Transverse colon (tissue), 4 donors: ENCODE measurements at regions of chr6 and their contacts with region 1.

Region 1: GRCh38 chr6:30130887-30131862 is 4.8 kb upstream of the TRIM40 start:
- DNase-seq: peak; percentile 73
- H3K4me3 ChIP-seq: no peak overlapping the region
- H3K27ac ChIP-seq: peak overlapping the region; percentile 58 to 69 (median 66)
- H3K4me1 ChIP-seq: peaks cover 8 to 34% (median 22%) of the 10 kb centered on the region in 4 donors
- H3K27me3 ChIP-seq: peaks cover 65% of the 10 kb centered on the region
- CTCF ChIP-seq: peak; percentile 94 to 99 (median 98)
- EP300 ChIP-seq: no peak
- POLR2A ChIP-seq: no peak

Region 2: GRCh38 chr6:30102970-30103874 is 28.0 kb before region 1 on chr6:
- in situ Hi-C with region 1: no loop called
- intact Hi-C with region 1: loop called (anchors 2 kb)
- DNase-seq: peak; percentile 93
- H3K4me3 ChIP-seq: peak overlapping the region in 3 of 4 donors; percentile 21 to 55 (median 27)
- H3K27ac ChIP-seq: peak overlapping the region; percentile 80 to 84 (median 82)
- H3K4me1 ChIP-seq: peaks cover 25 to 46% (median 32%) of the 10 kb centered on the region in 4 donors
- H3K27me3 ChIP-seq: peaks cover 38% of the 10 kb centered on the region
- CTCF ChIP-seq: peak; percentile 86 to 99 (median 93)
- EP300 ChIP-seq: no peak
- POLR2A ChIP-seq: peak; percentile 28

Region 3: GRCh38 chr6:31097568-31098053 is 966.4 kb after region 1 on chr6:
- in situ Hi-C with region 1: no loop called
- intact Hi-C with region 1: loop called (anchors 5 kb)
- DNase-seq: no peak
- H3K4me3 ChIP-seq: no peak overlapping the region
- H3K27ac ChIP-seq: no peak overlapping the region
- H3K4me1 ChIP-seq: peaks cover 0 to 23% (median 13%) of the 10 kb centered on the region in 4 donors
- H3K27me3 ChIP-seq: no peaks in the 10 kb centered on the region
- CTCF ChIP-seq: no peak
- EP300 ChIP-seq: no peak
- POLR2A ChIP-seq: no peak